Posterior vena cava (tissue), 2 donors: ENCODE measurements at regions of chr4 and their contacts with region 1.

Region 1: DNA sequence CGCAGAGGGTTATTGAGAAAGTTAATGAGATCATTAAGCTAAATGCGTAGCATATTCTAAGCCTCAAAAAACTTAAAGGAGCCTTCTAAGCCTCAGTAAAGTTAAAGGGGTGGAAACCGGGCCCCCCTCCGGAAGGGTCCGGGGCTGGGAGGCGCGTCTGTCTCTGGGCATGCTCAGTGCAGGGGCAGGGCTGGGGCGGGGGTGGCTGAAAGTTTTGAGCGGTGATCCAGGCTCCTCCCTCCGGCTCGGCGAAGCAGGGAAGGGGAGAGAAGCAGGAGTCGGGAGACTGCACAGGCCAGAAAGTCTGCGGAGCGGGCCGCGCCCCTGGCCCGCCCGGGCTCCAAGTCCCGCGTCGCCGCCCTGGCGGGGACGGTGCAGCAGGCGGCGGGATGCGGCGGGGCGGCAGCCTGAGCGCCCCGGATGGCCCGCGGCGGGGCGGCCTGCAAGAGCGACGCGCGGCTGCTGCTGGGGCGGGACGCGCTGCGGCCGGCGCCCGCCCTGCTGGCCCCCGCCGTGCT is at the start of gene EVC:
- DNase-seq: peak; percentile 91
- total RNA-seq, gene EVC: 25.6 to 31.7 TPM

Region 2: GRCh38 chr4:5611750-5612149 is 99.3 kb before region 1 on chr4:
- intact Hi-C with region 1: no loop called
- DNase-seq: no peak

Region 3: GRCh38 chr4:5747738-5748365 is 36.8 kb after region 1 on chr4:
- intact Hi-C with region 1: loop called in 1 of 2 experiments (anchors 5 kb)
- DNase-seq: no peak

Region 4: GRCh38 chr4:5785806-5786680 is 75.0 kb after region 1 on chr4:
- intact Hi-C with region 1: loop called in 1 of 2 experiments (anchors 10 kb)
- DNase-seq: peak; percentile 19